IMR-90 (cell line): ENCODE measurements at regions of chr2 and their contacts with region 1.

Region 1: DNA sequence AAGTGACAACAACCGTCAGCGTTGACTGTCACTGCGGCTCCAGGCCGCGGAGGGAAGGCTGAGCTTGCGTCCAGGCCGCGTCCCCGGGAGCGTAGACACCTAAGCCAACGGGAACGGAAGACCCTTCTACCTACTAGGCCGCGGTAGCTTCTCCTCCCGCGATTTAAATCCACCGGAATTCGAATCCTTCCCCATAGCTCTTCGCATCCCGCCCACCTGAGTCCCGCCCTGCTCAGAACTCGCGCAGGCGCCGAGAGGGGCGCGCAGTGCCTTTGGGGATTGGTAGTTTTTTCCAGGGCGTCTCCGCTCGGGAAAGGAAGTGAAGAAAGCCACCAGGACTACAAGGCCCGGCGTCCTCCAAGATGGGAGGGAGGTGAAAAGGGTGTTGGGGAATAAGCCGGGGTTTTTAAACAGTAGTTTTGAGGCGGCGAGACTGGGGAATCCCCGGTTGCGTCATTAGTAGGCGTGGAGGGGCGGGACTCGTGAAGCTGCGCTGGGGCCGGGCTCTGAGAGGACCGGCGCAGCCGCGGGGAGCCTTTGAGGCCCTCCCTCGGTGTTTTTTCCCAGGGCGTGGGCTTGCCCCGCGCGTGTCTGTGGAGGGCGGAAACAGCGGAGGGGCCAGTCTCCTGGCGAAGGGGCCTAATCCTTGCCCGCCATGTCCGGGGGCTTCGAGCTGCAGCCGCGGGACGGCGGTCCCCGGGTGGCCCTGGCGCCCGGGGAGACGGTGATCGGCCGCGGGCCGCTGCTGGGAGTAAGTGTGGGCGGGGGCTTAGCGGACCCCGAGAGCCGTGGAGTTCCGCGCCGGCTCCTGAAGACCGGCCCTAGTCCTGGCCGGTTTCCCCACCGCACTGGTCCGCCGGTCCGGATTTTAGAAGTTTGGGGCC is at the starts of genes APLF and FBXO48:
- DNase-seq: peak; percentile 99
- ATAC-seq: peak; percentile 96
- H3K4me3 ChIP-seq: peak within 1 kb of the TSS; percentile 75
- H3K27ac ChIP-seq: peak within 1 kb of the TSS; percentile 63
- H3K4me1 ChIP-seq: peaks cover 3% of the 10 kb centered on the region; the same call in 1 of the 2 replicates
- H3K27me3 ChIP-seq: no peaks in the 10 kb centered on the region
- CTCF ChIP-seq: no peak
- POLR2A ChIP-seq: peak; percentile 91
- RAD21 ChIP-seq: no peak
- total RNA-seq, gene APLF: 2.3 and 3.3 TPM in 2 replicates
- total RNA-seq, gene FBXO48: 0.18 and 0.28 TPM in 2 replicates

Region 2: DNA sequence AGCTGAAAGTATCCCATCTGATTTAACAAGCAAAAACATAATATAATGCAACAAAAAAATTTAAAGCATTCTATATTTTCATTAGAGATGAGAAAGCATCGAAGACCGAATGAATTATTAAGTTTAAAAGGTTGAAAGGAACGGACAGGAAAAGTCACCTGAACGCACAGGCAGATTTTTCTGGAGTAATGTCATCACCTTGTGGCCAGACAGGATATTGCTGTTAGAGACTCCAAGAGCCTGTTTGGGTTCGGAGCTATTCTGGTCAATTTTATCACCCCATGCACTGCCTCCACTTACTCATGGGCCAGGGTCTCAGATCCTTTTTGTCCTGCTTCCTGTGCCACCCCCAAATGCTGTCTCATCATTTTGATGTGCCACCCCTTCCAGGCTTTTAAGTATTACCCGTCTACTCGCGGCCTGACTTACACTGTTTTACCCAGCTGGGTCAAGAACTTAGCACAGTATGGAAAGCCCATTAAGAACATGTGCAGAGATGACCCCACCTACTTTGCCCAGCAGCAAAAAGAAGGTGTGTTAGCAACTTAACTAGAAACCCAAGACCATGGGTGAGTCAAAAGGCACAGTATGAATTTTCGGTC is 458.1 kb after region 1 on chr2:
- CTCF ChIA-PET with region 1: interaction called, 13 read pairs
- POLR2A ChIA-PET with region 1: no interaction called
- dilution Hi-C with region 1: no loop called
- in situ Hi-C with region 1: loop called (anchors 10 kb)
- intact Hi-C with region 1: loop called (anchors 2 kb)
- DNase-seq: peak; percentile 64
- ATAC-seq: peak; percentile 67; the same call in 1 of the 2 replicates
- H3K4me3 ChIP-seq: no peak overlapping the region
- H3K27ac ChIP-seq: no peak overlapping the region
- H3K4me1 ChIP-seq: peaks cover 3% of the 10 kb centered on the region
- H3K27me3 ChIP-seq: no peaks in the 10 kb centered on the region; the same call in 1 of the 2 replicates
- CTCF ChIP-seq: peak; percentile 96
- POLR2A ChIP-seq: peak; percentile 20; the same call in 1 of the 2 replicates
- RAD21 ChIP-seq: peak; percentile 96

Region 3: GRCh38 chr2:69322631-69323030 is 855.3 kb after region 1 on chr2:
- CTCF ChIA-PET with region 1: no interaction called
- POLR2A ChIA-PET with region 1: no interaction called
- dilution Hi-C with region 1: no loop called
- in situ Hi-C with region 1: no loop called
- intact Hi-C with region 1: loop called (anchors 10 kb)
- DNase-seq: no peak
- ATAC-seq: no peak
- H3K4me3 ChIP-seq: no peak overlapping the region
- H3K27ac ChIP-seq: no peak overlapping the region
- H3K4me1 ChIP-seq: peaks cover 9% of the 10 kb centered on the region
- H3K27me3 ChIP-seq: no peaks in the 10 kb centered on the region
- CTCF ChIP-seq: no peak
- POLR2A ChIP-seq: no peak
- RAD21 ChIP-seq: no peak

Region 4: DNA sequence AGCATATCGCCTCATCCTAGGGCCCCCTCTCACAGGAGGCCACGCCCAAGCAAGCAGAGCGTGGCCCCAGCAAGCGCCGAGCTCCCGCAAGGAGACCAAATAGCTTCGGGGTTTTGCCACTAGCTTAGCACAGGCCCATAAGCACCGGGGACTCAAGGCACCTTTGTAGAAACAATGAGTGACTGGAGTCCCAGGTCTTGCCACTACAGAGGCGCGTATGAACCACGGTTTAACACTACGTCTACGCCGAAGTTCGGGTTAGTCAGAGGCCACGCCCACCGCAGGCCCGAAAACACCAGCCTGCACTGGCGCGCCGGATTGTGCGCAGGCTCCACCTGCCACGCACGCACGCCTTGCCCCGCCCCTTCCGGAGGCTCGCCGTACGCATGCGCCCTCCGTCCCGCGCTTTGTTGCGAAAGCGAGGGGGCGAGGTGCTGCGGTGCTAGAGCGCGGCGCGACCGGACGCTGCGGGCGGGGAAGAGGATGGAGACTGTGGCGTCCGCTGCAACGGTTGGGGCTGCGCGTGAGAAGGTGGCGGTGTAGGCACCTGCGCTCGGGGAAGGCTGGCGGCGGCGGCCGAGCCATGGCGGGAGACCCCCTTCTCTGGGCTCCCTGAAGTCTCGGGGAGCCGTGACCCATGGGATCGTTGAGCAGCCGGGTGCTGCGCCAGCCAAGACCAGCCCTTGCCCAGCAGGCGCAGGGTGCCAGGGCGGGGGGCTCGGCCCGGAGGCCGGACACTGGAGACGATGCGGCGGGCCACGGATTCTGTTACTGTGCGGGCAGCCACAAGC is 1362.1 kb after region 1 on chr2 and contains the start of gene GMCL1:
- CTCF ChIA-PET with region 1: no interaction called
- POLR2A ChIA-PET with region 1: no interaction called
- dilution Hi-C with region 1: no loop called
- in situ Hi-C with region 1: no loop called
- intact Hi-C with region 1: loop called (anchors 5 kb)
- DNase-seq: peak; percentile 94
- ATAC-seq: peak; percentile 95
- H3K4me3 ChIP-seq: peak within 1 kb of the TSS; percentile 58
- H3K27ac ChIP-seq: peak within 1 kb of the TSS; percentile 80
- H3K4me1 ChIP-seq: 0 out of 2 replicates have a peak, but pooled peaks cover 2% of the 10 kb centered on the region
- H3K27me3 ChIP-seq: no peaks in the 10 kb centered on the region
- CTCF ChIP-seq: no peak
- POLR2A ChIP-seq: peak; percentile 86
- RAD21 ChIP-seq: no peak
- total RNA-seq, gene GMCL1: 3.4 and 6.1 TPM in 2 replicates